Activated T-helper 2 cell treated with anti-CD3 and anti-CD28 coated beads, Interferon-gamma antibody, Interleukin-2, Interleukin-4, amounts not matched to agents 10 μg/mL and 5 μg/mL and 100 μg/mL, durations not matched to agents 14 hours and 24 hours and 36 hours (primary cell): ENCODE measurements at regions of chr18 and their contacts with region 1.

Region 1: GRCh38 chr18:62324917-62325805 is at the start of gene TNFRSF11A:
- DNase-seq: peak; percentile 62
- H3K4me3 Mint-ChIP-seq: peak within 1 kb of the TSS; percentile 92
- H3K27ac Mint-ChIP-seq: peak within 1 kb of the TSS; percentile 82
- H3K4me1 Mint-ChIP-seq: peaks cover 56% of the 10 kb centered on the region
- H3K27me3 Mint-ChIP-seq: peaks cover 32% of the 10 kb centered on the region
- total RNA-seq, gene TNFRSF11A: 38.2 and 43.0 TPM in 2 replicates

Region 2: GRCh38 chr18:62018034-62018758 is 307.0 kb before region 1 on chr18:
- intact Hi-C with region 1: no loop called
- DNase-seq: no peak
- H3K4me3 Mint-ChIP-seq: no peak overlapping the region
- H3K27ac Mint-ChIP-seq: no peak overlapping the region
- H3K4me1 Mint-ChIP-seq: peaks cover 2% of the 10 kb centered on the region
- H3K27me3 Mint-ChIP-seq: peaks cover 20% of the 10 kb centered on the region

Region 3: GRCh38 chr18:62165583-62165982 is 159.6 kb before region 1 on chr18:
- intact Hi-C with region 1: no loop called
- DNase-seq: no peak
- H3K4me3 Mint-ChIP-seq: no peak overlapping the region
- H3K27ac Mint-ChIP-seq: no peak overlapping the region
- H3K4me1 Mint-ChIP-seq: peaks cover 16% of the 10 kb centered on the region
- H3K27me3 Mint-ChIP-seq: no peaks in the 10 kb centered on the region

Region 4: DNA sequence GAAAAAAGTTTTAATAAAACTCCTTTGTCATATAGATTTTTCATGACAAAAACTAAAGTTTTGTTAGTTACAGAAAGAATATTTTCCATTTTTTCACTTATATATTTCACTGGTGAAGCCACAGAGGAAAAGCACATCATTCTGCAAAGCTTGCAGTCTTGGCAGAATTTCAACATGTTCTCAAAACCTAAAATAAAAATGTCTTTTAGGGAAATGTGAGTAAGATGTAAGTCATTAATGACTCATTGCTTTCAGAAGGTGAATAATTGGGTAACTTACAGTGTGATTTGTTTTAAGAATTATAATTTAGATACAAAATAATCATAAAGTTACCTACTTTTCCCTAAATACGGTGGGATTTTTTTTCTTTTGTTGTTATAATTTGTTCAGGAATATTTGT is 43.5 kb before region 1 on chr18:
- intact Hi-C with region 1: loop called (anchors 5 kb)
- DNase-seq: no peak
- H3K4me3 Mint-ChIP-seq: no peak overlapping the region
- H3K27ac Mint-ChIP-seq: no peak overlapping the region
- H3K4me1 Mint-ChIP-seq: peaks cover 21% of the 10 kb centered on the region
- H3K27me3 Mint-ChIP-seq: no peaks in the 10 kb centered on the region

Region 5: DNA sequence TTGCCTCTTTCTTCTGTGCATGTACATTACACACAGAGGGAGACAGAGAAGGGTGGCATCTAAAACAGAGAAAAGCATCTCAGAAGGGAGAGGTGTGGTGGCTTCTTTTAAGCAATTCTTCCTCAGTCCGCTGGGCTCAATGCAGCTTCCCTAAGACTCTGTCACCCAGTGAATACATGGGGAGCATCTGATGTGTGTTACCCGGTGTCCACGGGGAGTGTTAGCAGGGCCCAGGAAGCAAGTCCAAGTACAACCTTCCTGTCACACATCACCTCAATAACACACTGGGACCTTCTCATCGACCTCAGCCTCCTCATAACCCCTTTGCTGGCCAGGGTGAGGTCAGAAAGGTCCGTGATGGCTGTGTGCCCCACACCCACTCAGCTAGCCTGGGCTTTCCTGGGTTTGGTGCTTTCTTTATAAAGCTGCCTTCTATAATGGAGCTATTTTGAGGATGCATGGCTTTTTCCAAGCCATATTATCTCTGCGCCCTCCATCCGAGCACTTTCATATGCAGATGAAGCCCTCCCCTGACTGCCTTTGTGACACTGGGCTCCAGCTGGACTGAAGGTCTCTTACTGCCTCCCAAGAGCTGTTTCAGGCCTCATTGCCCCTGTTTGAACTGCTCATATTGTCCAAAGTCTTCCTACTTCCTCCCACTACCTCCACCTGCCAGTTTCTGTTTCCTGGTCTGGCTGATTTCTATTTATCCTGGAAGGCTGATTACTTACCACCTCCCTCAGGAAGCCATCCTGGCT is 21.4 kb after region 1 on chr18:
- intact Hi-C with region 1: loop called (anchors 1 kb)
- DNase-seq: no peak
- H3K4me3 Mint-ChIP-seq: peak overlapping the region; percentile 61
- H3K27ac Mint-ChIP-seq: peak overlapping the region; percentile 90
- H3K4me1 Mint-ChIP-seq: peaks cover 61% of the 10 kb centered on the region
- H3K27me3 Mint-ChIP-seq: no peaks in the 10 kb centered on the region

Region 6: GRCh38 chr18:62425465-62426195 is 100.5 kb after region 1 on chr18:
- intact Hi-C with region 1: loop called (anchors 2 kb)
- DNase-seq: peak; percentile 55
- H3K4me3 Mint-ChIP-seq: peak overlapping the region; percentile 44
- H3K27ac Mint-ChIP-seq: peak overlapping the region; percentile 72
- H3K4me1 Mint-ChIP-seq: peaks cover 40% of the 10 kb centered on the region
- H3K27me3 Mint-ChIP-seq: no peaks in the 10 kb centered on the region

Region 7: DNA sequence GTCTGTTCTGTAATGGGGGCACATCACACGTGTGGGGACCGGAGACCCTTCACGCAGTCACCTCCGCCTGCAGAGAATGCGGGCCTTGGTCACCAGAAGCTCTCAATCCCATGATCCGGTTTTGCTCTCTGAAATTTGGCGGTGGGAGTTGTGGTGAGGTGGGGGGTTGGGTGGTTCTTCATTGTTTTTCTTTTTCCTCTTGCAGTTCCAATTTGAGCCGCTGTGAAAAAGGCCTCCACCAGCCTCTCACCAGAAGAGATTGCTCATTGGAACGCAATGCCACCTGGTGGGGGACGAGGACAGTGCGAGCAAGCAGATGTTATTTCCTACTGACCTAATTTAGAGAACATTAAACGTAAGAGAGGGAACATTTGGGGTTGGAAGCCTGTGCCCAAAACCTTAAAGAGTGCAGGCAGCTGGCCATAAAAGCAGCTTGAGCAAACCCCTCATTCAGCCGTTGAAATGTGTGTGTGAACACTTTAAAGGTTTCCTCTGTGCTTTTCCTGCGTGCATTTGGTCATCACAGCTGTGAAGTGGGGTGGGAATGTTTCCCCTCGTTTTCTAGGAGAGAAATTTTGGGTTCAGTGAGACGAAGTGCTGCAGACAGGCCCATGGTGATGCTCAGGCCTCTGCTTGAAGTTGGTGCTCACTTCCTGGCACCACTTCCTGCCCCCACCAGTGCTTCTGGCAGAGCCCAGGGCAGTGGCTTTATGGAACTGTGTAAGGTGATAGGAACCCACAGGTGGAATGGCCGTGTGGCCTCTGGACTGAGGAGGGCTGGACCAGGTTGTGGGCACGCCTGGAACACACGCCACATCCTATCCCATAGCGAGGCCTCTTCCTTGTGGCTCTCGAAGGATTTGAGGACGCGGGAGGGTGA is 259.3 kb after region 1 on chr18:
- intact Hi-C with region 1: loop called (anchors 5 kb)
- DNase-seq: peak; percentile 77
- H3K4me3 Mint-ChIP-seq: peak overlapping the region; percentile 28
- H3K27ac Mint-ChIP-seq: peak overlapping the region; percentile 46
- H3K4me1 Mint-ChIP-seq: peaks cover 35% of the 10 kb centered on the region
- H3K27me3 Mint-ChIP-seq: no peaks in the 10 kb centered on the region

Region 8: DNA sequence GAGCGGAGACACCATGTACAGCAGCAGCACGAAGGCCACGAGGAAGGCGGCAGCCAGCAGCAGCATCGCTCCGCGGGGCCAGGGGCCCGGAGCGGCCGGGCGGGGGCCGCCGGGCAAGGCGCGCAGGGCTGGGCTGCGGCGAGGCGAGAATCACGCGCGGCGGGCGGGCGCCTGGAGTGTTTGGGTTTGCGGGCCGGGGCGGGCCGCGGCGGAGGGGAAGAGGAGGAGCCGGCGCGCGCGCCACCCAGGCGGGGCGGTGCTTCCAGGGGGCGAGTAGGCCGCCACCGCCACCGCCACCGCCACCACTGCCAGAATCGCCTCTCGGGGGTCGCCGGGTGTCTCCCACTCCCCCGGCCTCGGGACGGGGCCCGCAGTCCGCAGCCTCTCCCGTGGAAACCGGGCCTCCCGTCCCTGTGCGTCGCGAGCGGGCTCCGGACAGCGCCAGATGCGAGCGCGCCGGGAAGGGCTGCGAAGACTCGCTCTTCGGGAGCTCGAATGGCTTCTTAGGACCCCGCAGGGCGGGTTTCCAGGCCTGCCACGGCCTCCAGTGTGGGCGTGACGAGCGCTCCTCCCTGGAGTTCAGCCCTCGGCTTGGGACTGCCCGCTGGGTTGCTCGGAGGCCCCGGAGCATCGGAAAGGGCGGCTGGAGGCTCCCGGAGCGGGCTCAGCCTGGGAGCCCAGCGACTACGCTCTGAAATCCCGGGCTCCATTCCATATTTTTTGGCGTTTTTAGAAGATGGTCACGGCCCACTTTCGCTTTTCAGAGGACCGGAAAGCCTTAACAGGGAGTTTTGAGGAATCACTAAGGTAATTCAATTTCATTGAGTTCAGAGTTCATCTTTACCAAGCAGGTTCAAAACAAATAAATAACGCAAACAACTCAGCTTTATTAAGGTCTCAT is 1042.1 kb after region 1 on chr18 and contains the start of gene KDSR:
- intact Hi-C with region 1: loop called (anchors 5 kb)
- DNase-seq: peak; percentile 82
- H3K4me3 Mint-ChIP-seq: peak within 1 kb of the TSS; percentile 94
- H3K27ac Mint-ChIP-seq: peak within 1 kb of the TSS; percentile 84
- H3K4me1 Mint-ChIP-seq: peaks cover 28% of the 10 kb centered on the region
- H3K27me3 Mint-ChIP-seq: no peaks in the 10 kb centered on the region
- total RNA-seq, gene KDSR: 73.3 and 76.1 TPM in 2 replicates